ENCODE measurements at regions of chr5 and their contacts with region 1.

Region 1: GRCh38 chr5:15794052-15794985 is 294.3 kb downstream of the FBXL7 start:
- DNase-seq: no peak
- ATAC-seq: peak in 1 of 4 donors; percentile 70
- H3K4me3 ChIP-seq: no peak overlapping the region
- H3K27ac ChIP-seq: peak overlapping the region in 10 of 12 donors; percentile 28 to 77 (median 58)
- H3K4me1 ChIP-seq: peaks cover 0 to 87% (median 48%) of the 10 kb centered on the region in 12 donors
- H3K27me3 ChIP-seq: no peaks in the 10 kb centered on the region
- CTCF ChIP-seq: peak in 9 of 12 donors; percentile 26 to 56 (median 41)
- POLR2A ChIP-seq: no peak

Region 2: GRCh38 chr5:15376803-15377202 is 417.5 kb before region 1 on chr5:
- intact Hi-C with region 1: no loop called
- DNase-seq: no peak
- ATAC-seq: no peak
- H3K4me3 ChIP-seq: no peak overlapping the region
- H3K27ac ChIP-seq: no peak overlapping the region
- H3K4me1 ChIP-seq: no peaks in the 10 kb centered on the region
- H3K27me3 ChIP-seq: no peaks in the 10 kb centered on the region
- CTCF ChIP-seq: no peak
- POLR2A ChIP-seq: no peak

Region 3: DNA sequence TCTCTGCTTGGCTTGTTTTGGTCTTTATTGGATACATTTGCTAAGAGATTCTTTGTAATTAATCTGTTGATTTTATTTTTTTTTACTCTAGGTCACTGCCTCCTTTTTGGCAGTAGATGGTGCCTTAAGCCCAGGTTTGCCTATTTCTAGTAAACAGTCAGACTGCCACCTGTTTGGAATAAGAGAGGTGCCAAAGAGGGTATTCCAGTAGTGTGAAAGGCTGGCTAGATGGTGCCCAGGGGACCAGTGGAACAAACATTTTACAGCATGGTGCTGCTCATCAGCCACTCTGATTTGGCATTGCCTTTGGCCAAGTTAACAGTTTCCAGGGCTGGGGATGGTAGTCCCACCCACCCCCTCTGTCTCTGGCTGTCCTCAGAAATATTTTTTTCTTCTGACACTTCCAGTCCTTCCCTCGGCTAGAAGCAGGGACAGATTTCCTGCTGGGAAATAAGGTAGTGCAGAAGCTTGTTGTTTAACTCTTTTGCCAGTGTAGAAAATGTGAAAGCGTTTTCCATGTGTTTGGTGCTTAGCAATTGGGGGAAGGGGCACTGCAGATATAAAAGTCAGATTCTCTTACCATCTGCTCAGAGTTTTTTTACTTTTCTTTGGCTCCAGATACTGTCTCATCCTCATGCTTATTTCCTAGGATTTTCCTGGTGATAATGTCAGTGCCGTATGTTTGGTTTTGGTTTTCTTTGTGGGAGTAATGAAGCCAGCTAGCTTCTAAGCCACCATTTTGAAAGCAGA is 330.9 kb before region 1 on chr5:
- intact Hi-C with region 1: loop called in 1 of 10 experiments (anchors 10 kb)
- DNase-seq: no peak
- ATAC-seq: no peak
- H3K4me3 ChIP-seq: no peak overlapping the region
- H3K27ac ChIP-seq: no peak overlapping the region
- H3K4me1 ChIP-seq: no peaks in the 10 kb centered on the region
- H3K27me3 ChIP-seq: no peaks in the 10 kb centered on the region
- CTCF ChIP-seq: peak in 11 of 12 donors; percentile 13 to 58 (median 52)
- POLR2A ChIP-seq: no peak

Region 4: GRCh38 chr5:15499528-15500324 is 294.6 kb before region 1 on chr5 and contains the start of gene FBXL7:
- intact Hi-C with region 1: loop called in 9 of 10 experiments (anchors 5 to 10 kb)
- DNase-seq: peak; percentile 88 to 92 (median 89)
- ATAC-seq: peak; percentile 90 to 93 (median 91)
- H3K4me3 ChIP-seq: peak within 1 kb of the TSS; percentile 69 to 93 (median 81)
- H3K27ac ChIP-seq: peak within 1 kb of the TSS; percentile 83 to 96 (median 90)
- H3K4me1 ChIP-seq: peaks cover 3 to 38% (median 18%) of the 10 kb centered on the region in 12 donors
- H3K27me3 ChIP-seq: peaks cover 0 to 14% (median 0%) of the 10 kb centered on the region in 9 donors
- CTCF ChIP-seq: peak in 9 of 12 donors; percentile 9 to 55 (median 37)
- POLR2A ChIP-seq: peak in 1 of 2 donors; percentile 57
- total RNA-seq, gene FBXL7: 17.6 to 27.6 (median 24.5) TPM

Region 5: DNA sequence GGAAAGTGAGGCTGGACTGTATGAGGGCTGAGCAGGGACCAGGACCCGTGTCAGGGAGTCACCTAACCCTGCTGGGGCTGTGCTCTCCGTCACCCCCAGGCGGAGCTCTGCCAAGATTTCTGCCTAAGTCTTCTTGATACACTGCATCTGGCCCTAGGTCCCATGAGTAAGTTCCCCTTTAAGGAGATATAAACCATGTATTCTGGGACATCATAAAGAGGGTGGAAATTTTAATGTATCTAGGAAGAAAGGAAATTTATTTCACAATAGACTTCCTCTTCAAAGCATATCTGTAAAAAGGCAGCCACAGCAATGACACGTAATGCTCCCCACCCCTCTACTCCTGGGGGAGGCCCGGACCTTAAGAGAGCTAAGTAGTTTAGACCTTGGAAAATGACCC is 111.0 kb before region 1 on chr5:
- intact Hi-C with region 1: loop called in 1 of 10 experiments (anchors 10 kb)
- DNase-seq: peak in 4 of 5 donors; percentile 35 to 69 (median 48)
- ATAC-seq: peak in 3 of 4 donors; percentile 59 to 72 (median 68)
- H3K4me3 ChIP-seq: no peak overlapping the region
- H3K27ac ChIP-seq: no peak overlapping the region
- H3K4me1 ChIP-seq: peaks cover 0 to 37% (median 21%) of the 10 kb centered on the region in 12 donors
- H3K27me3 ChIP-seq: no peaks in the 10 kb centered on the region
- CTCF ChIP-seq: peak in 10 of 12 donors; percentile 10 to 46 (median 24)
- POLR2A ChIP-seq: no peak

Region 6: GRCh38 chr5:15719784-15720183 is 74.5 kb before region 1 on chr5:
- intact Hi-C with region 1: no loop called
- DNase-seq: peak in 1 of 5 donors; percentile 34
- ATAC-seq: peak in 3 of 4 donors; percentile 27 to 65 (median 55)
- H3K4me3 ChIP-seq: no peak overlapping the region
- H3K27ac ChIP-seq: peak overlapping the region in 6 of 12 donors; percentile 28 to 61 (median 41)
- H3K4me1 ChIP-seq: peaks cover 0 to 61% (median 35%) of the 10 kb centered on the region in 12 donors
- H3K27me3 ChIP-seq: no peaks in the 10 kb centered on the region
- CTCF ChIP-seq: no peak
- POLR2A ChIP-seq: no peak

Region 7: DNA sequence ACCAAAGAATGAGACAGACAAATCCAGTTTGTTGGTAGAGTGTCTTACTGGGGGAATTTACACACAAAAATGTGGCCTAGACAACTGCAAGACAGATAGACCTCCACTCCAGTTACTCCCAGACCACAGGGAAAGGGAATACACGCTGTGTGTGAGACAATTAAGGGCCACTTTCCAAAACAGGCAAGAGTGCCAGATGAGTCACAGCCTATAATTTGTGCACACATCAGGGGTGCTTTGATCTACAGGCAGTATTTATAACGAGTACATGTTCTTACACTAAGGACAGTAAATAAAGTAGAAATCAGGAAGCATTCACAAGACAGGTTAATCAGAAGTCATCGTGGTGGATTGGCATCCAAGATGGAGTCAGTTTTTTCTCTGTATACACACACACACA is 556.5 kb after region 1 on chr5:
- intact Hi-C with region 1: no loop called
- DNase-seq: peak in 1 of 5 donors; percentile 31
- ATAC-seq: peak; percentile 64 to 87 (median 74)
- H3K4me3 ChIP-seq: no peak overlapping the region
- H3K27ac ChIP-seq: no peak overlapping the region
- H3K4me1 ChIP-seq: no peaks in the 10 kb centered on the region
- H3K27me3 ChIP-seq: no peaks in the 10 kb centered on the region
- CTCF ChIP-seq: no peak
- POLR2A ChIP-seq: no peak